Activated naive CD4-positive, alpha-beta T cell treated with anti-CD3 and anti-CD28 coated beads for 36 hours (primary cell): ENCODE measurements at regions of chr20 and their contacts with region 1.

Region 1: DNA sequence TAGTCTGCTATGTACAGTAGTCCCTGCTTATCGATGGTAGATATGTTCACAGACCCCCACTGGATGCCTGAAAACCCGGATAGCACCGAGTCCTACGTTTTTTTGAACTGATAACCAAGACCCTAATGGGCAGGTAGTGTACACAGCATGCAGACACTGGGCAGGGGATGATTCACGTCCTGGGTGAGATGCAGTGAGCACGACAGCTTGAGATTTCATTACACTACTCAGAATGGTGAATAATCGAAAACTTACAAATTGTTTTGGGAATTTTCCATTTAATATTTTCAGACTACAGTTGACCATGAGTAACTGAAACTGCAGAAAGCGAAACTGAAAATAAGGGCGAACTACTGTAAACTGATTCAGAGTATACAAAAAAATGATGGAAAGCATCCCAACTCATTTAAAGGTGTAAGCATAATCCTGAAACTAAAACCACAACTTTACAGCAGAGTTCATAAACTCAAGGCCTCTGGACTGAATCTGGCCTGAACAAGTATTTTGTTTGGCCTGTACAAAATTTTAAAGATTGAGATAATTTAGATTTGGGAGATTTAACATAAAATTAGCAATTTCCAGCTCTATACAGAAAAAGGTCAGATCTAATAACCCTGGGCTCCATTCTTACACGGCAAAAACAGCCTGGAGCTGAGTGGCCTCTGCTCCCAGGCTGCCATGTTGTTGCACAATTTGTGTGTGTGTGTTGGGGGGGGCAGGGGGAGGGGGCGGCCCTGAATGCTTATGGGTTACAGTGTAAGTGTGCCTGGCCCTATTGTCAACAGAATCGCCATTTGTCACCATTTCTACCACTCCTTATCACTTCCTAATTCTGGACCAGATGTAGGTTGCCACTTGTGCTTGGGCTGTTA is 34.9 kb downstream of the RNF24 start:
- DNase-seq: peak; percentile 59
- H3K4me3 Mint-ChIP-seq: peak overlapping the region; percentile 62
- H3K27ac Mint-ChIP-seq: peak overlapping the region; percentile 83
- H3K4me1 Mint-ChIP-seq: peaks cover 20% of the 10 kb centered on the region
- H3K27me3 Mint-ChIP-seq: no peaks in the 10 kb centered on the region

Region 2: GRCh38 chr20:3927486-3928291 is 52.8 kb before region 1 on chr20:
- CTCF ChIA-PET with region 1: no interaction called
- intact Hi-C with region 1: no loop called
- DNase-seq: no peak
- H3K4me3 Mint-ChIP-seq: no peak overlapping the region
- H3K27ac Mint-ChIP-seq: peak overlapping the region; percentile 51
- H3K4me1 Mint-ChIP-seq: peaks cover 49% of the 10 kb centered on the region
- H3K27me3 Mint-ChIP-seq: no peaks in the 10 kb centered on the region

Region 3: GRCh38 chr20:3995067-3995748 is 14.7 kb after region 1 on chr20:
- CTCF ChIA-PET with region 1: interaction called, 3 read pairs
- intact Hi-C with region 1: loop called (anchors 1 kb)
- DNase-seq: peak; percentile 34
- H3K4me3 Mint-ChIP-seq: no peak overlapping the region
- H3K27ac Mint-ChIP-seq: peak overlapping the region; percentile 68
- H3K4me1 Mint-ChIP-seq: peaks cover 46% of the 10 kb centered on the region
- H3K27me3 Mint-ChIP-seq: no peaks in the 10 kb centered on the region

Region 4: DNA sequence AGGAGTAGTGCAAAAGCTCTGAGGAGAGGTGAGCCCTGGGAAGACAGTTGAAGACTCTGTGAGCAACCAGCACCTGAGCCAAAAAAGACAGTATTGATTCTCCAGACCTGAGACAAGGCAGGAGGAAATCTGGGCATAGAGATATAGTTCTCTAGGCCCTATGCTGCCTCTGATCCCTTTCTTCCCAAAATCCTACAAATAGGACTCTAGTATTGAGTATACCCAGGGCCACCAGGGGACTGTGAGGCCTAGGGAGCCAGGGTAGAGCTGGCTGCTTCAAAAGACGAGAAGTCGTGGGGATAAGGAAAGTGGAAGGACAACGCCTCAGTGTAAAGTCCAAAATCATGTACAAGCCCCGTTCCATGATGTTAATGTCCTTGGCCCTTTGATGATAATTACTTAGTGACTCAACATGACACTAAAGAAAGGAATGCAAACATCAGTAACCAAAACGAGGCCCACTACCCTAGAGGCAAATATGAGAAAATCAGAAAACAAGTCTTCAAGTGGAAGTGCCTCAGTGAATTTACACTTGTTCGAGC is 1533.5 kb after region 1 on chr20:
- CTCF ChIA-PET with region 1: no interaction called
- intact Hi-C with region 1: no loop called
- DNase-seq: no peak
- H3K4me3 Mint-ChIP-seq: no peak overlapping the region
- H3K27ac Mint-ChIP-seq: no peak overlapping the region
- H3K4me1 Mint-ChIP-seq: no peaks in the 10 kb centered on the region
- H3K27me3 Mint-ChIP-seq: no peaks in the 10 kb centered on the region